Ascending aorta (tissue), 2 donors: ENCODE measurements at regions of chr13 and their contacts with region 1.

Region 1: GRCh38 chr13:27826379-27827353 is 34.4 kb downstream of the GSX1 start:
- DNase-seq: peak in 1 of 2 donors; percentile 87
- H3K4me3 ChIP-seq: peak overlapping the region in 1 of 2 donors; percentile 51
- H3K27ac ChIP-seq: no peak overlapping the region
- H3K4me1 ChIP-seq: peaks cover 0 to 5% of the 10 kb centered on the region in 2 donors
- H3K27me3 ChIP-seq: no peaks in the 10 kb centered on the region
- CTCF ChIP-seq: peak; percentile 77 to 92 (median 87)

Region 2: DNA sequence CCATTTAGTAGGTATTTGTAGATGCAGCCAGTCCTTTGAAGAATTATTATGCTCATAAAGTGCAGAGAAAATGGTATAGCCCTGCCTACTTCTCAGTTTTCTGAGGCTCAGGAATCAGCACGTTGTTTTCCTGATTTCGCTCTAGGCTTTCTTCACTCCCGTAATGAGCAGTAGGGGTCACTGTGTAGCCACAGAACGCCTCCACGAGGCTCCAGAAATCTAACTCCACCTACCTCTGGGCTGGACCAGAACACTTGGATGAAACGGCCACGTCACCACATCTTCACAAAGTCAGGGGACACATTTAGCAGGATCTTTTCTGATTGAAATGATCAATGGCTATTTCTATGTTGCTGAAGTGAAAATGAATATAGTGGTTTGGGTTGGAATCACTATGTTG is 452.0 kb before region 1 on chr13:
- intact Hi-C with region 1: loop called (anchors 2 kb)
- DNase-seq: peak in 1 of 2 donors; percentile 85
- H3K4me3 ChIP-seq: no peak overlapping the region
- H3K27ac ChIP-seq: no peak overlapping the region
- H3K4me1 ChIP-seq: no peaks in the 10 kb centered on the region
- H3K27me3 ChIP-seq: no peaks in the 10 kb centered on the region
- CTCF ChIP-seq: peak; percentile 39 to 75 (median 61)

Region 3: DNA sequence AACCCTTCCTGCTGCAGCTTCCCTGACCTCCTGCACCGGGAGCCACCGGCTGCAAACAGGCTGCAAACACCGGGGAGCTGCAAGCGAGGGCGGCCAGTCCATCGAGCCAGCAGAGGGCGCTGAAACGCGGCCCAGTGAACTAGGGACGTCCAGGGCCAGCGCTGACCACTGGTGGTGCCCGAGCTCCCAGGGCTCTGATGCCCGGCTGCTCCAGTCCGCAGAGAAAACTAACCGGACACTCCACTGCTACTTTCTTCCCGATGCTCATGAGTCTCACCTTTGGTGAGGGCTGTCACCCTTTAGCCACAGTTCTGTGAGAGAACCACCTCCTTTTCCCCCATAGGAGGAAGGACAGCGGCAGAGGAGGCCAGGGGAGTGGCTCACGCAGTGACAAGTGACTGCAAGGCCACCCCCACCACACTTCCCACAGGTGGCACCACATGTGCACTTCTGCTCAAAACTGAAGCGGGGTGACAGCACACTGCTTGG is 293.5 kb before region 1 on chr13:
- intact Hi-C with region 1: loop called (anchors 1 kb)
- DNase-seq: peak; percentile 18 to 84
- H3K4me3 ChIP-seq: no peak overlapping the region
- H3K27ac ChIP-seq: no peak overlapping the region
- H3K4me1 ChIP-seq: no peaks in the 10 kb centered on the region
- H3K27me3 ChIP-seq: no peaks in the 10 kb centered on the region
- CTCF ChIP-seq: peak; percentile 78 to 88 (median 86)

Region 4: GRCh38 chr13:27556109-27556508 is 270.6 kb before region 1 on chr13:
- intact Hi-C with region 1: loop called (anchors 1 kb)
- DNase-seq: peak in 1 of 2 donors; percentile 67
- H3K4me3 ChIP-seq: no peak overlapping the region
- H3K27ac ChIP-seq: no peak overlapping the region
- H3K4me1 ChIP-seq: no peaks in the 10 kb centered on the region
- H3K27me3 ChIP-seq: no peaks in the 10 kb centered on the region
- CTCF ChIP-seq: peak in 2 of 3 experiments; percentile 14 to 46

Region 5: GRCh38 chr13:27980280-27980998 is 153.8 kb after region 1 on chr13:
- intact Hi-C with region 1: loop called (anchors 1 kb)
- DNase-seq: no peak
- H3K4me3 ChIP-seq: peak overlapping the region in 1 of 2 donors; percentile 17
- H3K27ac ChIP-seq: no peak overlapping the region
- H3K4me1 ChIP-seq: peaks cover 2 to 10% of the 10 kb centered on the region in 2 donors
- H3K27me3 ChIP-seq: peaks cover 13% of the 10 kb centered on the region
- CTCF ChIP-seq: no peak

Region 6: GRCh38 chr13:28778308-28779215 is 951.9 kb after region 1 on chr13:
- intact Hi-C with region 1: no loop called
- DNase-seq: no peak
- H3K4me3 ChIP-seq: no peak overlapping the region
- H3K27ac ChIP-seq: no peak overlapping the region
- H3K4me1 ChIP-seq: no peaks in the 10 kb centered on the region
- H3K27me3 ChIP-seq: no peaks in the 10 kb centered on the region
- CTCF ChIP-seq: no peak